ENCODE measurements at regions of chr3 and their contacts with region 1.

Region 1: GRCh38 chr3:108477511-108478147 is 32.8 kb downstream of the MYH15 start:
- DNase-seq: peak; percentile 36
- H3K4me3 Mint-ChIP-seq: no peak overlapping the region
- H3K27ac Mint-ChIP-seq: no peak overlapping the region
- H3K4me1 Mint-ChIP-seq: peaks cover 1% of the 10 kb centered on the region
- H3K27me3 Mint-ChIP-seq: peaks cover 12% of the 10 kb centered on the region

Region 2: GRCh38 chr3:107927361-107928083 is 550.1 kb before region 1 on chr3:
- intact Hi-C with region 1: loop called (anchors 5 kb)
- DNase-seq: peak; percentile 56
- H3K4me3 Mint-ChIP-seq: peak overlapping the region; percentile 90
- H3K27ac Mint-ChIP-seq: peak overlapping the region; percentile 77
- H3K4me1 Mint-ChIP-seq: peaks cover 15% of the 10 kb centered on the region
- H3K27me3 Mint-ChIP-seq: peaks cover 14% of the 10 kb centered on the region

Region 3: GRCh38 chr3:108153451-108153981 is 324.1 kb before region 1 on chr3:
- intact Hi-C with region 1: loop called (anchors 1 kb)
- DNase-seq: peak; percentile 38
- H3K4me3 Mint-ChIP-seq: no peak overlapping the region
- H3K27ac Mint-ChIP-seq: no peak overlapping the region
- H3K4me1 Mint-ChIP-seq: peaks cover 20% of the 10 kb centered on the region
- H3K27me3 Mint-ChIP-seq: no peaks in the 10 kb centered on the region

Region 4: GRCh38 chr3:108698461-108698860 is 220.8 kb after region 1 on chr3:
- intact Hi-C with region 1: no loop called
- DNase-seq: no peak
- H3K4me3 Mint-ChIP-seq: no peak overlapping the region
- H3K27ac Mint-ChIP-seq: no peak overlapping the region
- H3K4me1 Mint-ChIP-seq: no peaks in the 10 kb centered on the region
- H3K27me3 Mint-ChIP-seq: peaks cover 5% of the 10 kb centered on the region

Measured in activated T-helper 2 cell treated with anti-CD3 and anti-CD28 coated beads, Interferon-gamma antibody, Interleukin-2, Interleukin-4, amounts not matched to agents 10 μg/mL and 5 μg/mL and 100 μg/mL, durations not matched to agents 14 hours and 24 hours and 36 hours (primary cell).